Activated CD8-positive, alpha-beta T cell treated with anti-CD3 and anti-CD28 coated beads, Interleukin-2, amount 10 ng/mL, durations not matched to agents 7 days and 5 days (primary cell): ENCODE measurements at regions of chr15 and their contacts with region 1.

Region 1: DNA sequence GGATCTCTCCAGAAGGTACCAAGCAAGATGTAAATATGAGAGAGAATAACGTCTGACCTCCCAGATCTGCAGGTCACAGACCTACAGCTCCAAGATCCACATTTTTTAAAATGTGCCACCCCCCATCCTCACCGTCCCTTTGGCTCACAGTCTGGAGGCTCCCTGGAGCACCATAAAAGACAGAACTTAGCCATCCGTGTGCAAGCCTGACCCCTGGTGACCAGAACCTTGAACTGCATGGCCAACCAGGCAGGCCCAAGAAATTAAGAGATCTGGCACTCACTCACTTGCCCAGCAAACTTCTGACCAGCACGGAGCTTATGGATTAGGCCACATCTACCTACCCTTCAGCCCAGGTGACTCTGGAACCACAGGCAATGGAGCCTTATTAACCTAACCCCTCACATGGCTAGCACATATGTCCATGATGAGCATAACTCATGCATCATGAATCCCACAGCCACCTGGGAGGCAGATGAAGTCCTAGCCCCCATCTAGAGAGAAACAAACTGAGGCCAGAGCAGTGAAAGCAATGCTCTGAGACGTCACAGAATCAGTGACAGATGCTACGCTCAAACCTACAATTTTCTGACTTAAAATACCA is 275.3 kb downstream of the UACA start:
- DNase-seq: peak; percentile 82
- ATAC-seq: no peak
- H3K4me3 Mint-ChIP-seq: no peak overlapping the region
- H3K27ac Mint-ChIP-seq: no peak overlapping the region
- H3K4me1 Mint-ChIP-seq: peaks cover 72% of the 10 kb centered on the region
- H3K27me3 Mint-ChIP-seq: peaks cover 37% of the 10 kb centered on the region

Region 2: GRCh38 chr15:70474471-70475396 is 13.4 kb before region 1 on chr15:
- CTCF ChIA-PET with region 1: interaction called, 13 read pairs
- POLR2A ChIA-PET with region 1: interaction called, 7 read pairs
- DNase-seq: peak; percentile 68
- ATAC-seq: peak; percentile 61
- H3K4me3 Mint-ChIP-seq: peak overlapping the region; percentile 44
- H3K27ac Mint-ChIP-seq: peak overlapping the region; percentile 30
- H3K4me1 Mint-ChIP-seq: peaks cover 44% of the 10 kb centered on the region
- H3K27me3 Mint-ChIP-seq: peaks cover 70% of the 10 kb centered on the region

Region 3: GRCh38 chr15:70504299-70504951 is 16.3 kb after region 1 on chr15:
- CTCF ChIA-PET with region 1: interaction called, 74 read pairs
- POLR2A ChIA-PET with region 1: interaction called, 14 read pairs
- DNase-seq: no peak
- ATAC-seq: peak; percentile 40
- H3K4me3 Mint-ChIP-seq: no peak overlapping the region
- H3K27ac Mint-ChIP-seq: peak overlapping the region; percentile 69
- H3K4me1 Mint-ChIP-seq: peaks cover 69% of the 10 kb centered on the region
- H3K27me3 Mint-ChIP-seq: peaks cover 7% of the 10 kb centered on the region

Region 4: GRCh38 chr15:70528270-70528706 is 40.2 kb after region 1 on chr15:
- CTCF ChIA-PET with region 1: interaction called, 21 read pairs
- POLR2A ChIA-PET with region 1: interaction called, 4 read pairs
- DNase-seq: peak; percentile 82
- ATAC-seq: peak; percentile 99
- H3K4me3 Mint-ChIP-seq: peak overlapping the region; percentile 57
- H3K27ac Mint-ChIP-seq: peak overlapping the region; percentile 94
- H3K4me1 Mint-ChIP-seq: peaks cover 49% of the 10 kb centered on the region
- H3K27me3 Mint-ChIP-seq: no peaks in the 10 kb centered on the region